Adrenal gland (tissue), 19 donors: ENCODE measurements at regions of chr17 and their contacts with region 1.

Region 1: DNA sequence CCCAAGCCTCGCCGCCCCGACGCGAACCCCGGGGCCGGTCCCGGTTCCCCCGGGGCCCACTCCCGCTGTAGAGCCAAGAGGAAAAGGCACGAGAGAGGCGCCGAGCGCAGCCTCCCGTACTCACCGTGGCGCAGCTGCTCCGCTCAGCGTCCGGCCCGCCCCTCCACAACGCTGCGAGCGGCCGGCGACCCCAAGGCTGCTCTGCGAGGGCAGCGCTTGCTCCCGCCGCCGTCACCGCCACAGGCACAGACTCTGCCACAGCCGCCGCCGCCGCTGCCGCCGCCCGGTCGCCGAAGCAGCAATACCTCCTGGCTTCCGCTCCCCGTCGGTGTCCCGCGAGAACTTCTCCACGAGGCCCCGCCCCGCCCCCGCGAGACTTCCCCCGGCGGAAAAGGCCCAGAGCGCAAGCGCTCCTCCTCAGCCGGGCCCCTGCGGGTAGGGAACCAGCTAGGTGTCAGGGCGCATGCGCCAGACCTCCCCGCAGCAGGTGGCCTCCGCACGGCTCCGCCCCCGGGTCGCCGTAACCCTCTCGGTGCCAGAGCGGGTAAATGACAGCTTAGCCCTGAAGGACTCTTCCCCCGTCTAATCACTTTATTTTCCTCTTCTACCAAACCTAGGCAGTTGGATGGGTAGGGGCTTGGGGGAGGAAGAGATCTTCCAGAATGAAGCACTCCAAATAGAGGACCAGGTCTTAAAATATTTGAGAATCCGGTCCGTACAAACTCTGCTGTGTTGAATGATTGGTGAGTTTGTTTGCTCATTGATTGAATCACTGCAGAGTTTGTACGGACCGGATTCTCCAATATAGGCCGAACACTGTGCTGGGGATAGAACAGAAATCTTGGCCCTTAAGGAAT is at the start of gene GRB2:
- DNase-seq: peak; percentile 98 to 99 (median 99)
- H3K4me3 ChIP-seq: peak within 1 kb of the TSS; percentile 30 to 98 (median 81)
- H3K27ac ChIP-seq: peak within 1 kb of the TSS; percentile 68 to 98 (median 94)
- H3K4me1 ChIP-seq: peaks cover 4 to 25% of the 10 kb centered on the region in 2 donors
- H3K27me3 ChIP-seq: no peaks in the 10 kb centered on the region
- CTCF ChIP-seq: no peak
- POLR2A ChIP-seq: peak; percentile 88 to 95
- total RNA-seq, gene GRB2: 84.4 to 374 (median 117) TPM

Region 2: GRCh38 chr17:75271233-75271954 is 134.2 kb before region 1 on chr17:
- intact Hi-C with region 1: loop called in 1 of 2 experiments (anchors 10 kb)
- DNase-seq: peak; percentile 69 to 82 (median 76)
- H3K4me3 ChIP-seq: peak overlapping the region; percentile 37 to 92 (median 51)
- H3K27ac ChIP-seq: peak overlapping the region; percentile 3 to 95 (median 95)
- H3K4me1 ChIP-seq: peaks cover 21 to 37% of the 10 kb centered on the region in 2 donors
- H3K27me3 ChIP-seq: no peaks in the 10 kb centered on the region
- CTCF ChIP-seq: peak in 5 of 6 experiments; percentile 11 to 97 (median 73)
- POLR2A ChIP-seq: no peak

Region 3: GRCh38 chr17:75325827-75326225 is 79.8 kb before region 1 on chr17:
- intact Hi-C with region 1: loop called (anchors 5 kb)
- DNase-seq: peak in 1 of 7 donors; percentile 35
- H3K4me3 ChIP-seq: no peak overlapping the region
- H3K27ac ChIP-seq: peak overlapping the region in 2 of 5 donors; percentile 58 to 62
- H3K4me1 ChIP-seq: peaks cover under 1 to 20% of the 10 kb centered on the region in 2 donors
- H3K27me3 ChIP-seq: no peaks in the 10 kb centered on the region
- CTCF ChIP-seq: no peak
- POLR2A ChIP-seq: no peak

Region 4: GRCh38 chr17:75476271-75476671 is 70.7 kb after region 1 on chr17:
- intact Hi-C with region 1: no loop called
- DNase-seq: peak; percentile 58 to 85 (median 75)
- H3K4me3 ChIP-seq: peak overlapping the region in 1 of 4 donors; percentile 5
- H3K27ac ChIP-seq: peak overlapping the region in 4 of 5 donors; percentile 36 to 84 (median 68)
- H3K4me1 ChIP-seq: peaks cover 26 to 51% of the 10 kb centered on the region in 2 donors
- H3K27me3 ChIP-seq: no peaks in the 10 kb centered on the region
- CTCF ChIP-seq: no peak
- POLR2A ChIP-seq: no peak